IMR-90 (cell line): ENCODE measurements at regions of chr12 and their contacts with region 1.

Region 1: GRCh38 chr12:46357438-46358324 is 14.9 kb downstream of the SLC38A2 start:
- DNase-seq: peak; percentile 93
- ATAC-seq: peak; percentile 53
- H3K4me3 ChIP-seq: no peak overlapping the region
- H3K27ac ChIP-seq: no peak overlapping the region
- H3K4me1 ChIP-seq: peaks cover 2% of the 10 kb centered on the region; the same call in 1 of the 2 replicates
- H3K27me3 ChIP-seq: no peaks in the 10 kb centered on the region
- CTCF ChIP-seq: no peak
- POLR2A ChIP-seq: peak; percentile 78
- RAD21 ChIP-seq: peak; percentile 5; the same call in 1 of the 2 replicates

Region 2: DNA sequence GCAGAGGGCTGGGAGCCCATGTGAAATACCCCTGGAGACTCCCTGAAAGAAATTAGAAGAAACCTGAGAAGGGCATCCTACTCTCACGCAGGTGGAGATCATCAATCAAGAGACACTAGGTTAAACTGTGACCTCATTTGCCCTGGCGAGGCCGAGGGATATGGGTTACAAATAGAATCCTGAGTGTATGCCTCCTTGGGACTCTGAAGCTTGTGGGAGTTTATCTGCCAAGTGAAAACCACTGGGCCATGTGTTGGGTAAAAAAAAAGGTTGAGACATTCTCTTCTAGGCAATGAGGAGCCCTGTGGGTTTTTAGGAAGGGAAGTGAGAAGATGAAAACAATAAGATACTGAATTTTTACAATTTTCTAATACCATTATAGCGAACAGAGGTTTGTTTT is 788.9 kb before region 1 on chr12:
- CTCF ChIA-PET with region 1: no interaction called
- POLR2A ChIA-PET with region 1: no interaction called
- dilution Hi-C with region 1: no loop called
- in situ Hi-C with region 1: no loop called
- intact Hi-C with region 1: no loop called
- DNase-seq: no peak
- ATAC-seq: no peak
- H3K4me3 ChIP-seq: no peak overlapping the region
- H3K27ac ChIP-seq: no peak overlapping the region
- H3K4me1 ChIP-seq: no peaks in the 10 kb centered on the region
- H3K27me3 ChIP-seq: peaks cover 11% of the 10 kb centered on the region
- CTCF ChIP-seq: no peak
- POLR2A ChIP-seq: no peak
- RAD21 ChIP-seq: no peak

Region 3: GRCh38 chr12:45587877-45588533 is 769.7 kb before region 1 on chr12:
- CTCF ChIA-PET with region 1: no interaction called
- POLR2A ChIA-PET with region 1: no interaction called
- dilution Hi-C with region 1: no loop called
- in situ Hi-C with region 1: no loop called
- intact Hi-C with region 1: no loop called
- DNase-seq: no peak
- ATAC-seq: no peak
- H3K4me3 ChIP-seq: no peak overlapping the region
- H3K27ac ChIP-seq: no peak overlapping the region
- H3K4me1 ChIP-seq: no peaks in the 10 kb centered on the region
- H3K27me3 ChIP-seq: peaks cover 2% of the 10 kb centered on the region
- CTCF ChIP-seq: no peak
- POLR2A ChIP-seq: no peak
- RAD21 ChIP-seq: no peak

Region 4: DNA sequence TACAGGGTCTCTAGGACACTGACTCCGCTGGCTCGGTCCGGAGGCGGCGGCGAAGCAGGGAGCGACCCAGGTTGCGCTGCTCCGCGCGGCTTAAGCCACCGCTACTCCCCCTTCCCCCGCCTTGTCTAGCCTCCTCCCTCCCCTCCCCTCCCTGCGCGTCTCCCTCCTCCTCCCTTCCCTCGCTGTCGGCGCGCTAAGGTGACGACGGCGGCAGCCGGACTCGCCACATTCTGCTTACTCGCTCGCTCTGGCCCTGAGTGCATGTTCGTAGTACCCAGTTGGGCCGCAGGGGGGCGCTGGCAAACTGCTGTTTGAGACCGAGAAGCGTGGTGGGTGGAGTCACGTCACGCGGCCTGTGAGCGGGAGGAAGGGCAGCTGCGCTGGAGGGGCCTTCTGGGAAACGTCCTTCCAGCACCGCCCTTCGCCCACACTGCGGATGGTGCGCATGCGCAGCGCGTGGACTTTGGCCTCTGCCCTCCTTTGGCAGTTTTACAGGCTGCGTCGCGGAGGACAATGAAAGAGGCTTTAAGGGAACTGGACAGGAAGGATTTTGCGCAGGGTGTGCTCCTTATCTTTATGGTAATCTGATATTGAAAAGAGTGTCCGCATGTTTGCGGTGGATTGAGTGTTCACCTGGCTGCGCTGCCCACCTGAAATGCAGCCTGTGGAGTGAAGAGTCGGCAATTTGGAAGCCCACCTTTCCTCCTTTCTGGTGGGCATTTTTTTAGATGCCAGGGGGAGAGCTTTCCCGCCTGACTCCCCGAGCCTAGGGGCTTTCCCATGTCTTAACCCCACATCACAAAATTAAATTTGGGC is 367.0 kb before region 1 on chr12 and contains the start of gene SCAF11:
- CTCF ChIA-PET with region 1: no interaction called
- POLR2A ChIA-PET with region 1: no interaction called
- dilution Hi-C with region 1: no loop called
- in situ Hi-C with region 1: no loop called
- intact Hi-C with region 1: loop called (anchors 5 kb)
- DNase-seq: peak; percentile 100
- ATAC-seq: peak; percentile 86
- H3K4me3 ChIP-seq: peak within 1 kb of the TSS; percentile 78
- H3K27ac ChIP-seq: peak within 1 kb of the TSS; percentile 87
- H3K4me1 ChIP-seq: peaks cover 3% of the 10 kb centered on the region; the same call in 1 of the 2 replicates
- H3K27me3 ChIP-seq: no peaks in the 10 kb centered on the region
- CTCF ChIP-seq: peak; percentile 99
- POLR2A ChIP-seq: peak; percentile 86
- RAD21 ChIP-seq: peak; percentile 84
- total RNA-seq, gene SCAF11: 70.4 and 90.3 TPM in 2 replicates

Region 5: DNA sequence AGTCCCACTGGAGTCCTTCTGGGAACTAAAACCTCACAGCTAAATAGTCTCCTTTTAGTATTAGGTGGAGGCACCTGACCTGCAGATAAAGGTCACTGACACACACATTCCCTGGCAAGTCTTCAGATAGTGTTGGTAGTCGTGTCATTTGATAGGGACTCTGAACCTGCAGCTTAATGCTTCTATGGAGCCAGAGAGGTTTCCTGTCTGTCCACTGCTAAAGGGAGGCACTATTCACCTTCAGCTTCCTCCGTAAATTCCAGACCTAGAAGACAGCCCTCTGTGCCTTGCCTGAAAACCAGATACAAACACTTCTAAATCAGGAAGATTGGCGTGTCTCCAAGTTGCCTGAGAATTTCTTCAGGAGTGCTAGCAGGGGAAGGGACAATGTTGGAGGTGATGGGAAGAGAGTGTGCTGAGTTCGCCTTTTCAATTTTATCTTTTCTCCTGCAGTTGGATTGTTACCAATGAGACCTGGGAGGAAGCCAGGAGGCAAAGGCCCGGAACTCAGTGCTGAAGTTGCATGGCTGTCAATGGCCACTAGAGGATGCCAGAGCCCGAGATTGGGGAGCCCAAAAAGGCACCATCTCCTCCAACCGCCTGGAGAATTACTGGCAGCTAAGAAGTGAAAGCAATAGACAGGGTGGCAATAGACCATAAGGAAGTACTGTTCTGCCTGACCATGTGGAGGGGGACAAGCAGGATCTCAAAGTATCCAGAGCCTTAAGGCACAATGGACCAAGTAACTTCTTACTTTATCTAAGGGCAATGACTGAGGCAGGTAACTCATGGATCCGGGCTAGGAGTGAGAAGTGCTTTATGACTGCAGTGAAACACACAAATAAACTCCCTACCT is 285.7 kb before region 1 on chr12:
- CTCF ChIA-PET with region 1: interaction called, 3 read pairs
- POLR2A ChIA-PET with region 1: interaction called, 3 read pairs
- dilution Hi-C with region 1: no loop called
- in situ Hi-C with region 1: no loop called
- intact Hi-C with region 1: loop called (anchors 1 kb)
- DNase-seq: peak; percentile 71
- ATAC-seq: peak; percentile 95
- H3K4me3 ChIP-seq: no peak overlapping the region
- H3K27ac ChIP-seq: no peak overlapping the region
- H3K4me1 ChIP-seq: peaks cover 2% of the 10 kb centered on the region; the same call in 1 of the 2 replicates
- H3K27me3 ChIP-seq: peaks cover 5% of the 10 kb centered on the region
- CTCF ChIP-seq: peak; percentile 96
- POLR2A ChIP-seq: no peak
- RAD21 ChIP-seq: peak; percentile 92

Region 6: GRCh38 chr12:46124848-46125619 is 232.6 kb before region 1 on chr12:
- CTCF ChIA-PET with region 1: interaction called, 4 read pairs
- POLR2A ChIA-PET with region 1: interaction called, 5 read pairs
- dilution Hi-C with region 1: no loop called
- in situ Hi-C with region 1: no loop called
- intact Hi-C with region 1: loop called (anchors 2 kb)
- DNase-seq: peak; percentile 87
- ATAC-seq: peak; percentile 95
- H3K4me3 ChIP-seq: no peak overlapping the region
- H3K27ac ChIP-seq: no peak overlapping the region
- H3K4me1 ChIP-seq: peaks cover 5% of the 10 kb centered on the region
- H3K27me3 ChIP-seq: peaks cover 11% of the 10 kb centered on the region
- CTCF ChIP-seq: peak; percentile 75
- POLR2A ChIP-seq: no peak
- RAD21 ChIP-seq: peak; percentile 68

Region 7: DNA sequence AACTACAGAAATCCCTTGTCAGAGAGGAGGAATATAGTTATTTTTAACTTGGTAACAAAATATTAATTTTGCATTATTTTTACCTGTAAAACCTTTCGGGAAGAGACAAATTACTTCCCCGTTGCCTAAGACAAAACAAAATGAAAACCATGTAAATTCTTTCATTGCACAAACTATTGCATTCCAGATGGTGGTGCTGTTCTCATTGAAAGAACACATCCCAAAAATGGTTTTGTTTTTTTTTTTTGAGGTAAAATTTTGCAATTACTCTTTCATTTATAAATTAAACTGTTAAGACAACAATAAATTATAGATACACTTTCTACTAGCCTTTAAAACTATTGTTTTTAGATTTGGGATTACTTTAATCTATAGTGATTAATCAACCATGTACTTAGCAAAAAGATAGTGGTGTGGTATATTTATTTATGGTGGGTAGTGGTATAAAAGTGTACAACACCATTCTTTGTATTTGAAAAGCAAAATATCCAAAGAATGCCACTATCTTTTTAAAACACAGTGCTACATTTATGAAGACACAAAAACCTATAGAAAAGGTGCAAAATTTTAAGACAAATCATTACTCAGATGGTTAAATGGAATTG is 204.3 kb before region 1 on chr12:
- CTCF ChIA-PET with region 1: no interaction called
- POLR2A ChIA-PET with region 1: interaction called, 3 read pairs
- dilution Hi-C with region 1: no loop called
- in situ Hi-C with region 1: loop called (anchors 10 kb)
- intact Hi-C with region 1: no loop called
- DNase-seq: peak; percentile 52
- ATAC-seq: no peak
- H3K4me3 ChIP-seq: no peak overlapping the region
- H3K27ac ChIP-seq: no peak overlapping the region
- H3K4me1 ChIP-seq: no peaks in the 10 kb centered on the region
- H3K27me3 ChIP-seq: no peaks in the 10 kb centered on the region
- CTCF ChIP-seq: peak; percentile 79
- POLR2A ChIP-seq: no peak
- RAD21 ChIP-seq: peak; percentile 70

Region 8: GRCh38 chr12:46187023-46187422 is 170.7 kb before region 1 on chr12:
- CTCF ChIA-PET with region 1: no interaction called
- POLR2A ChIA-PET with region 1: no interaction called
- dilution Hi-C with region 1: no loop called
- in situ Hi-C with region 1: no loop called
- intact Hi-C with region 1: loop called (anchors 10 kb)
- DNase-seq: peak; percentile 93
- ATAC-seq: peak; percentile 72
- H3K4me3 ChIP-seq: no peak overlapping the region
- H3K27ac ChIP-seq: no peak overlapping the region
- H3K4me1 ChIP-seq: peaks cover 4% of the 10 kb centered on the region
- H3K27me3 ChIP-seq: no peaks in the 10 kb centered on the region
- CTCF ChIP-seq: no peak
- POLR2A ChIP-seq: no peak
- RAD21 ChIP-seq: no peak

Region 9: GRCh38 chr12:47014474-47014873 is 656.8 kb after region 1 on chr12:
- CTCF ChIA-PET with region 1: no interaction called
- POLR2A ChIA-PET with region 1: no interaction called
- dilution Hi-C with region 1: no loop called
- in situ Hi-C with region 1: loop called (anchors 10 kb)
- intact Hi-C with region 1: no loop called
- DNase-seq: peak; percentile 96
- ATAC-seq: peak; percentile 97
- H3K4me3 ChIP-seq: peak overlapping the region; percentile 11; the same call in 1 of the 2 replicates
- H3K27ac ChIP-seq: no peak overlapping the region; the same call in 1 of the 2 replicates
- H3K4me1 ChIP-seq: peaks cover 12% of the 10 kb centered on the region
- H3K27me3 ChIP-seq: no peaks in the 10 kb centered on the region
- CTCF ChIP-seq: no peak
- POLR2A ChIP-seq: no peak
- RAD21 ChIP-seq: no peak